Right ventricle myocardium superior (tissue), 1 donor: ENCODE measurements at regions of chr19 and their contacts with region 1.

Region 1: DNA sequence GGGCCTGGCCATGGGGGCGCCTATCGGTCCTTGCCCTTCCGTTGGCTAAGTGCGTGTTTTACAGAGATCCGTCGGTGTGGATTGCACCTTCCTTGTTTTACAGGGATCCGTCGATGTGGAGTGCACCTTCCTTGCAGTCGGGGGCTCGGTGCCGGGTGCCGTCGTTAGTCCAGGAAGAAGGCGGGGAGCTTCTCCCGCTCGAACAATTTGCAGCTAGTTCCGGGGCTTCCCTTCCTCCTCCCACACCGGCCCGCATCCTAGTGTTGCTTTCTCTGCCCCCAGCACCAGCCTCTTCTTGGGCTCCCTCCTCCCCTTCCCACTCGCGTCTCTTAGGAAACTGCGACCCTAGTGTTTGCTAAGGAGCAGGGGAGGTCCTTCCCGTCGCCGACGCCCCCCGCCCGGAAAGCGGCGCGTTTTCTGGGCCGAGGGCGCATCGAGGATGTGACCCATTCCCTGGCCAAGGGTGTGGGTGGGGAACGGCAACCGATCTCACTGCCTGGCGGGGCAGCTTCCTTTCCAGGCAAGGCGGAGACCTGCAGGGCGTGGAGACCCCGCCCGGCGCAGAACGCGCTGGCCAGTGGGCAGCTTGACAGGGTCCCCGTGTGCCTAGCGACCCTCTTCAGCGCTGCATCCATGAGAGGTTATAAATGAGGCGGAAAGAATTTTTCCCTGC is 75.7 kb upstream of the ZNF91 start:
- DNase-seq: no peak
- ATAC-seq: no peak

Region 2: GRCh38 chr19:23321948-23322549 is 149.0 kb before region 1 on chr19:
- intact Hi-C with region 1: loop called (anchors 2 kb)
- DNase-seq: no peak
- ATAC-seq: peak; percentile 11